Sciatic nerve (tissue), 2 donors: ENCODE measurements at regions of chr16 and their contacts with region 1.

Region 1: GRCh38 chr16:53130159-53131049 is 75.6 kb downstream of the CHD9 start:
- DNase-seq: peak; percentile 97
- ATAC-seq: peak; percentile 94

Region 2: GRCh38 chr16:53282975-53283946 is 152.9 kb after region 1 on chr16:
- intact Hi-C with region 1: loop called (anchors 5 kb)
- DNase-seq: no peak
- ATAC-seq: no peak

Region 3: GRCh38 chr16:53369921-53370320 is 239.5 kb after region 1 on chr16:
- intact Hi-C with region 1: no loop called
- DNase-seq: no peak
- ATAC-seq: no peak

Region 4: GRCh38 chr16:53651357-53651756 is 521.0 kb after region 1 on chr16:
- intact Hi-C with region 1: no loop called
- DNase-seq: no peak
- ATAC-seq: no peak